ENCODE measurements at regions of chr12 and their contacts with region 1.

Region 1: DNA sequence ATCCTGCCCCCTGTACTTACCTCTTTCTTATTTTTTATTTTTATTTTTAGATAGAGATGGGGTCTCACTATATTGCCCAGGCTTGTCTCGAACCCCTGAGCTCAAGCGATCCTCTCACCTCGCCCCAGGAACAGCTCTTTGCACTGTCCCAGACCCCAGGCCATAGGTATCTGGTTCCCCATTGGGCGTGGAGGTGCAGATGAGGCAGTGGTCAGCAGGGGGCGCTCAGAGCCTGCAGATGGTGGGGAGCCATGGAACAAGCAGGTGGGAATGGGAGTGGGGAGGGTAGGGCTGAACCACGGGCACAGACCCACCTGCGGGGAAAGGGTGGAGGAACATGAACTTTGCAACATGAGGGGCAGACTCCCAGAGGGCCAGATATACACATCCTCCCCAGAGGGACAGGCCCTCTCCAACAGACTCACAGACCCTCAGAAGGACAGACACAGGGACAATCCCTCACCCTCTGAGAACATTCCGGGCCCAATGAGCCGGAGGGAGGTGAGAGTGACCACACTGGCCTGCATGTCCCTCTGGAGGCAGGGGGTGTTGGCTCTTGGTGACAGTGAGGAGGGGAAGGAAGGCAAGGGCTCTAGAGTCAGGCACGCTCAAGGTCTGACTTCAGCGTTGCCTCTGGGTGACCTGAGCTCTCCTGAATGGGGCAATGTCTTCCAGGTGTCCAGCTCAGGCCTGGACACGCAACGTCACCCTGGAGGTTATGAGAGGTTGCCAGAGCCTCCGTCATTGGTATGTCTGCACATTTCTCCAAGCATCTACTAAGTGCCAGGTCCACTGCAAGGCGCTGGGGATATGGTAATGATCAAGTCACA is 34.9 kb downstream of the KRT80 start:
- DNase-seq: peak; percentile 85
- H3K4me3 ChIP-seq: no peak overlapping the region
- H3K27ac ChIP-seq: no peak overlapping the region
- H3K4me1 ChIP-seq: peaks cover 2% of the 10 kb centered on the region
- H3K27me3 ChIP-seq: no peaks in the 10 kb centered on the region
- CTCF ChIP-seq: peak; percentile 91

Region 2: DNA sequence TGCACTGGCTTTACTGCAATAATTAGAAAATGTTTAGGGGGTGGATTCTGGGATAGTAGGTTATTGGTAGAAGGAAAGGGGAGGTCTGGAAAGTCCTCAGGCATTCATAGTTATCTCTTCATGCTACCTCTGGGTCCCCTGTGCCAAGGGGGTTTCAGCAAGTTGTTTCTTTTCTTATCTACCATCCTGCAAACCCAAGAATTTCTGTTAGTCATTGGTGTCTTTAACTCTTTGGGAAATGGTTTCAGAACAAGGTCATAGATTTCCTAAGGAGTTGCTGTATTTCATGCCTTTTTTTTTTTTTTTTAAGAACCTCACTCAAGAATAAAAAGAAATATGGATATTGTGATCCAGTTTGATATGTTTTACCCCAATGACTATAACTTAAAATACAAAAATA is 668.7 kb before region 1 on chr12:
- intact Hi-C with region 1: no loop called
- DNase-seq: no peak
- H3K4me3 ChIP-seq: no peak overlapping the region
- H3K27ac ChIP-seq: no peak overlapping the region
- H3K4me1 ChIP-seq: no peaks in the 10 kb centered on the region
- H3K27me3 ChIP-seq: no peaks in the 10 kb centered on the region
- CTCF ChIP-seq: no peak

Region 3: GRCh38 chr12:52327830-52328822 is 171.2 kb after region 1 on chr12:
- intact Hi-C with region 1: loop called (anchors 2 kb)
- DNase-seq: no peak
- H3K4me3 ChIP-seq: no peak overlapping the region
- H3K27ac ChIP-seq: no peak overlapping the region
- H3K4me1 ChIP-seq: no peaks in the 10 kb centered on the region
- H3K27me3 ChIP-seq: no peaks in the 10 kb centered on the region
- CTCF ChIP-seq: no peak

Region 4: DNA sequence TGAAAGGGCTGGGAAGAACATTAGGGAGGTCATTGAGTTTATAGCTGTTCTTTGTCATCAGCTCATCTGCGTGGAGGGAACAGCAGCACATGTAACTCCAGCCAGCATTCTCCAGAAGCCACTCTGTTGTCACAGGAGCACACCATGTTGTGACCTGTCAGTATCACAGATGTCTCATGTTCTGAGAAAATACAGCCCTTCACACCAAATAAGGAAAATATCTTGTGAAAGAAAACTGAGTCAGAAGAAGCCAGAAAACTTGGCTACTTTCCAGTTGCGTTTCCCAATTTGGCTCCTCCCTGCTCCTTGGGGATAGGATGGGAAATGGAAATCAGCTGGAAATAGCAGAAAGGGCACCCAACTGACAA is 259.4 kb after region 1 on chr12:
- intact Hi-C with region 1: no loop called
- DNase-seq: peak; percentile 45
- H3K4me3 ChIP-seq: no peak overlapping the region
- H3K27ac ChIP-seq: no peak overlapping the region
- H3K4me1 ChIP-seq: no peaks in the 10 kb centered on the region
- H3K27me3 ChIP-seq: no peaks in the 10 kb centered on the region
- CTCF ChIP-seq: no peak

Region 5: DNA sequence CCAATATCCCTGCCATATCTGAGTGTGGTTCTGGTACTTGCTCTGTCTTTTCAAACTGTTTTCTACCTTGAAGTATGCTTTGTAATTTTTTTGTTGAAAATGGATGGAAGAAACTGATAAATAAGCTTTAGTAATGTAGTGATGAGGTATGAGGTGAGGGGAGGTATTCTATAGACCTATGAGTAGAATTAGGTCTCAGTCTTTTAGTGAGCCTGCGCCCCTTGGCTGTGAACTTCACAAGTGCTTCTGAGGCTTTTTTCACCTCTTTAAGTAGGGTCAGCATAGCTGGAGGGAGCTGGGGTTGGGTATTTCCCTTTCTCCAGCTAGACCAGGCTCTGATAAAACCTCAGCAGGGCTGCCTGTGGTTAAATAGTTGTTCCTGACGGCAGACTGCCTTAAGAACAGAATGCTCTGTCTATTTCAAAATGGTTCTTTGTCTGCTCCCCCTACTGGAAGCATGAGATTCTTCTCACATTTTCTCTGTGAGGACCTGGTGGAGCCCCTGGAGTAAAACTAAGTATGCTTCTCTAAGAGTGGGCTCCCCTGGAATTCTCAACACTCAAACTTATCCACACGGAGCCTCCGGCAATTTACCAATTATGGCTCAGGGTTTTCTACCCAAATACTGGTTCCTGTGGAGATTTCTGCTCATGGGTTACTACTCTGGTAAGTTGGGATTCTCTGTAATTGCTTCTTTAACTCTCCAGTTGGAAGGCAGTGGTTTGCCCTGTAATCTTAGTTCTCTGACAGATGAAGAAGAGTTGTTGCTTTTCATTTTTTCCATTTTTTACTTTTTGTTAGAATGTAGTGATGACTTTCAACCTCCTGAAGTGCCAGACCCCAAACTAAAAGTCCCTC is 350.1 kb after region 1 on chr12:
- intact Hi-C with region 1: no loop called
- DNase-seq: no peak
- H3K4me3 ChIP-seq: no peak overlapping the region
- H3K27ac ChIP-seq: no peak overlapping the region
- H3K4me1 ChIP-seq: no peaks in the 10 kb centered on the region
- H3K27me3 ChIP-seq: no peaks in the 10 kb centered on the region
- CTCF ChIP-seq: peak; percentile 47

Region 6: GRCh38 chr12:52879394-52880351 is 722.7 kb after region 1 on chr12:
- intact Hi-C with region 1: loop called (anchors 5 kb)
- DNase-seq: peak; percentile 92
- H3K4me3 ChIP-seq: peak overlapping the region; percentile 22
- H3K27ac ChIP-seq: no peak overlapping the region
- H3K4me1 ChIP-seq: peaks cover 15% of the 10 kb centered on the region
- H3K27me3 ChIP-seq: no peaks in the 10 kb centered on the region
- CTCF ChIP-seq: peak; percentile 50

Measured in colonic mucosa (tissue), 4 donors.